SK-N-SH (cell line): ENCODE measurements at regions of chr5 and their contacts with region 1.

Region 1: GRCh38 chr5:102681407-102681983 is 73.6 kb upstream of the PAM start:
- DNase-seq: peak; percentile 70
- H3K4me3 ChIP-seq: no peak overlapping the region; a peak in 1 of 4 replicates
- H3K27ac ChIP-seq: peak overlapping the region in 1 of 2 experiments; percentile 34; a peak in 1 of 4 replicates
- H3K4me1 ChIP-seq: peaks cover 2 to 14% of the 10 kb centered on the region in 2 experiments; a peak in 3 of 4 replicates
- H3K27me3 ChIP-seq: no peaks in the 10 kb centered on the region
- CTCF ChIP-seq: peak; percentile 88
- EP300 ChIP-seq: no peak
- RAD21 ChIP-seq: peak; percentile 93

Region 2: GRCh38 chr5:102666164-102666946 is 15.1 kb before region 1 on chr5:
- CTCF ChIA-PET with region 1: interaction called, 13 read pairs
- POLR2A ChIA-PET with region 1: no interaction called
- DNase-seq: peak; percentile 52
- H3K4me3 ChIP-seq: no peak overlapping the region
- H3K27ac ChIP-seq: peak overlapping the region; percentile 27 to 79; a peak in 3 of 4 replicates
- H3K4me1 ChIP-seq: peaks cover 11 to 28% of the 10 kb centered on the region in 2 experiments
- H3K27me3 ChIP-seq: no peaks in the 10 kb centered on the region
- CTCF ChIP-seq: no peak
- EP300 ChIP-seq: peak; percentile 76 to 80; a peak in 3 of 4 replicates
- RAD21 ChIP-seq: no peak

Region 3: GRCh38 chr5:102754767-102755431 is 73.4 kb after region 1 on chr5 and contains the start of gene PAM:
- CTCF ChIA-PET with region 1: interaction called, 36 read pairs
- POLR2A ChIA-PET with region 1: no interaction called
- DNase-seq: peak; percentile 93
- H3K4me3 ChIP-seq: peak within 1 kb of the TSS; percentile 72 to 96
- H3K27ac ChIP-seq: peak within 1 kb of the TSS; percentile 89
- H3K4me1 ChIP-seq: peaks cover 20 to 22% of the 10 kb centered on the region in 2 experiments; a peak in 3 of 4 replicates
- H3K27me3 ChIP-seq: no peaks in the 10 kb centered on the region
- CTCF ChIP-seq: no peak
- EP300 ChIP-seq: no peak
- RAD21 ChIP-seq: no peak
- polyA plus RNA-seq, gene PAM: 507 and 662 TPM in 2 replicates

Region 4: DNA sequence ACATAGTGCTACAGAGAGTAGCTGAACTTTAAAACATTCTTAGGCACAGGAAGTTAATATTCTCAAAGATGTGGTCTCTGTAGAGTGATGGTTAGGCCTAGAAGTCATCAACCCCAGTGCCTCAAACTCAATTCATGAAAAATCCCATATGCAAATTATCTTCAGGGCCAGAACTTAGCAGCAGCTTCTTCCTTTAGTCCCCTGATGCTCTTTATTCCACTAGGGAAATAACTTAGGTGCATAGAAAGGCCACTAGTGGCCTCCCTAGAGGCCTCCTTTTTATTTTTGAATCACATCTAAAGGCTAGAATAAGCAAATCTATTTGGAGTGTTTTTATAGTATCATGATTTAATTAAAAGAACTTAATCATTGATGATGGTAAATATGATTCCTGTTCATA is 350.1 kb after region 1 on chr5:
- CTCF ChIA-PET with region 1: interaction called, 10 read pairs
- POLR2A ChIA-PET with region 1: no interaction called
- DNase-seq: no peak
- H3K4me3 ChIP-seq: no peak overlapping the region
- H3K27ac ChIP-seq: no peak overlapping the region
- H3K4me1 ChIP-seq: no peaks in the 10 kb centered on the region
- H3K27me3 ChIP-seq: no peaks in the 10 kb centered on the region
- CTCF ChIP-seq: peak; percentile 48
- EP300 ChIP-seq: no peak
- RAD21 ChIP-seq: no peak

Region 5: DNA sequence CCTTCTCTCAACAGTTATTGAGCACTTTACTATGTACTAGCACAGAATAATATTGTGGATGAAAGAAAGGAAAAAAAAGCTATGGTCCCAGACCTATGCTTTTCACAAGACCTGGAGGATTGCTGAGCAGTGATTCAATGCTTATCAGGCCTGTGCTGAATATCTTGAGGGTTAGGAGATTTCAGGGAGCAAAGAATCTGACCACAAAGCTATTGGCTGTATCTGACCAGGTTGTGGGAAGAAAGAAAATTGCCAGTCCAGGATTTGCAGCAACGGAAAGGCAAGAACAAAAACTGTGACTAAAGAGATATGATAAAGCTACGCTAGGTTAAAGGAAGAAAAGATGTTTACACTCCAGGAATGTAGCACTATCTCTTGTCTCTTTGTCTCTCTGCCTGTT is 562.2 kb after region 1 on chr5:
- CTCF ChIA-PET with region 1: no interaction called
- POLR2A ChIA-PET with region 1: no interaction called
- DNase-seq: no peak
- H3K4me3 ChIP-seq: no peak overlapping the region
- H3K27ac ChIP-seq: no peak overlapping the region
- H3K4me1 ChIP-seq: no peaks in the 10 kb centered on the region
- H3K27me3 ChIP-seq: no peaks in the 10 kb centered on the region
- CTCF ChIP-seq: no peak
- EP300 ChIP-seq: no peak
- RAD21 ChIP-seq: no peak